A549 (cell line): ENCODE measurements at regions of chr6 and their contacts with region 1.

Region 1: DNA sequence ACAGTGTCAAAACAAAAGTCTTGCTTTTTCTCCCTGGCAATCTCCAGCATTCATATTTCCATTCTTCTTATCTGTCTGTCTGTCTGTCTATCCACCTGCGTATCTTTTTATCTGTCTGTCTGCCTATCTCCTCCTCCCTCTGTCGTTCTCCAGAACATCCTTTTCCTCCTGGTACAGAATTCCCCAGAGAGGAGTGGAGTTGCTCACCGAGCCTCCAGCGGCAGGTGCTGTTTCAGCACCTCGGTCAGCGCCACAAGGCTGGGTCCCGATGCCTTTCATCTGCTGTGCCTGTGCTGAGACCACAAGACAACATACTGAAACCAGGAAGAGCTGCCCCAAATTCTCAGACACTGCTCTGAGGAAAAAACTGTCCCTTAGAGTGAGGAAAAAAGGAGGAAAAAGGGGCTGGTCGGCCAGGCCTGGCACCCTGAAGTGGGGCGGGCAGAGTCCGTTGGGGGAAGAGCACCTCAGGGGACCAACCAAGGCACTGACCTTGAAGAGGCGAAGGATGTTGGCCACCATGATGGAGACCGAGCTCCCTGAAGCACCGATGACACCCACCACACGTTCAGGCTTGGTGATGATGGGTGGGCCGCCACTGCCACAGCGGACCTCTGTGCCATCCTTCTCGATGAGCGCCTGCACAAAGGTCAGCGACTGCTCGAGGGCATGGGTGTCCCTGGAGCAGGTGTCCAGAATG is 13.3 kb downstream of the GRM4 start:
- DNase-seq: peak; percentile 21 to 32
- ATAC-seq: peak; percentile 63 to 68; a peak in 3 of 6 replicates
- H3K4me3 ChIP-seq: no peak overlapping the region
- H3K27ac ChIP-seq: no peak overlapping the region
- H3K4me1 ChIP-seq: no peaks in the 10 kb centered on the region
- CTCF ChIP-seq: no peak
- EP300 ChIP-seq: no peak
- POLR2A ChIP-seq: no peak
- RAD21 ChIP-seq: no peak

Region 2: GRCh38 chr6:34145161-34146020 is 12.8 kb after region 1 on chr6:
- CTCF ChIA-PET with region 1: interaction called, 11 read pairs
- POLR2A ChIA-PET with region 1: interaction called, 3 read pairs
- DNase-seq: peak in 1 of 2 experiments; percentile 37
- ATAC-seq: peak; percentile 73 to 75
- H3K4me3 ChIP-seq: peak overlapping the region; percentile 48
- H3K27ac ChIP-seq: peak overlapping the region in 1 of 2 experiments; percentile 68; a peak in 3 of 6 replicates
- H3K4me1 ChIP-seq: peaks cover 10% of the 10 kb centered on the region; the same call in 1 of the 3 replicates
- CTCF ChIP-seq: no peak
- EP300 ChIP-seq: no peak
- POLR2A ChIP-seq: no peak
- RAD21 ChIP-seq: no peak